ENCODE measurements at regions of chr15 and their contacts with region 1.

Region 1: DNA sequence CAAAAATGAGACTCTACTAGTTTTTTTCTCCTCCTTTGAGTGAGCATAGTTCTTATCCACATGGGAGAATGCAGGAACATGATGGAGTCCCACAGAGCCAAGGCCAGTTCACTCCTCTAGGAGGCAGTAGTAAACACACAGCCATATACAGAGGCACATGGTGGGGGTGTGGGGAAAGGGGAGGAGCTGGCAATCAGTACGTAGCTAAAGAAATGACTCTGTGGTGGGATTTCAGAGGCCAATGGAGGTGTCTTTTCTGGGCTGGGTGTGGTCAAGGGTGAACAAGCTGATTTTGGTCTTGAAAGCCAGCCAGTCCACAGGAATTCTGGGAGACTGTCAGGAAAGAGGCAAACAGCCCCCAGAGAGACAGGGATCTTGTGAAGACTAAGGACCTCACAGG is 6.6 kb upstream of the RAB11A start:
- DNase-seq: peak in 33 of 35 experiments; percentile 12 to 73 (median 45)
- ATAC-seq: peak; percentile 84 to 99 (median 88)
- H3K4me3 ChIP-seq: no peak overlapping the region
- H3K4me3 Mint-ChIP-seq: no peak overlapping the region
- H3K27ac ChIP-seq: no peak overlapping the region
- H3K27ac Mint-ChIP-seq: no peak overlapping the region
- H3K4me1 ChIP-seq: peaks cover 2 to 3% of the 10 kb centered on the region in 2 experiments
- H3K4me1 Mint-ChIP-seq: peaks cover 0 to 15% (median 4%) of the 10 kb centered on the region in 3 donors
- H3K27me3 ChIP-seq: no peaks in the 10 kb centered on the region
- H3K27me3 Mint-ChIP-seq: no peaks in the 10 kb centered on the region

Region 2: GRCh38 chr15:65881766-65882434 is 19.2 kb after region 1 on chr15:
- CTCF ChIA-PET with region 1: no interaction called
- POLR2A ChIA-PET with region 1: interaction called, 4 to 10 read pairs
- DNase-seq: peak in 1 of 35 experiments; percentile 25
- ATAC-seq: peak; percentile 31 to 78 (median 50)
- H3K4me3 ChIP-seq: peak overlapping the region in 1 of 2 donors; percentile 26
- H3K4me3 Mint-ChIP-seq: peak overlapping the region in 2 of 3 donors; percentile 31 to 50
- H3K27ac ChIP-seq: peak overlapping the region; percentile 39
- H3K27ac Mint-ChIP-seq: peak overlapping the region; percentile 57 to 85
- H3K4me1 ChIP-seq: peaks cover 14 to 33% of the 10 kb centered on the region in 2 experiments
- H3K4me1 Mint-ChIP-seq: peaks cover 55 to 70% (median 61%) of the 10 kb centered on the region in 3 donors
- H3K27me3 ChIP-seq: no peaks in the 10 kb centered on the region
- H3K27me3 Mint-ChIP-seq: no peaks in the 10 kb centered on the region

Measured in T-cell (primary cell).